GM18951 (cell line): ENCODE measurements at regions of chr1 and their contacts with region 1.

Region 1: GRCh38 chr1:58739856-58740466 is 40.1 kb upstream of the MYSM1 start:
- POLR2A ChIP-seq: no peak

Region 2: GRCh38 chr1:58442114-58442513 is 297.8 kb before region 1 on chr1:
- in situ Hi-C with region 1: no loop called
- POLR2A ChIP-seq: no peak

Region 3: DNA sequence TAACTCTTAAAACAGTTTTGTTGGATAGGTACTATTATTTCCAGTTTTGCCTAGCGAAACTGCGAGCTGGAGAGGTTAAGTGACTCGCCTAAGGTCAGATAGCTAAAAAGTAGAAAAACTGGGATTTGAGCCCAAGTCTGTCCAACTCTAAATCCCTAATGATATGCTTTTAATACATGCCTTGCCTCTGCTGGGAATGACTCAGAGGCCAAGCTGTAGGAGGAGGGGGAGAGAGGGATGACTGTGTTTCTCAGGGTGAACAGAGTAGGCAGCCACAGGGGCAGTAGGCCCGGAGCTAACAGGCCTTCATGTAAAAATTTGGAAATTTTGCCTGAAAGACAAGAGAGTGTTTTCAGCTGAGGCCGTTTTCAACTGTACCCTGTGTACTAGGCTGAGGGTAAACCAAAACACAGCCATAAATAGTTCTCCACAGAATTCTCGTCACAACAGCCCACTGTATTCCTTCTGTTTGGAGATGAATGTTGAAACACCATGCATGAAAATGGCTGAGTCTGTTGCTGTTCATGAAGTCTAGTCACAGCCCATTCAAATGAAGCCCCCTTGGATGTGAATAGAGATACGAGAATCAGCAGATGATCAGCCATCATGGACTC is 967.3 kb after region 1 on chr1:
- in situ Hi-C with region 1: loop called (anchors 10 kb)
- POLR2A ChIP-seq: no peak